ENCODE measurements at regions of chr14 and their contacts with region 1.

Region 1: DNA sequence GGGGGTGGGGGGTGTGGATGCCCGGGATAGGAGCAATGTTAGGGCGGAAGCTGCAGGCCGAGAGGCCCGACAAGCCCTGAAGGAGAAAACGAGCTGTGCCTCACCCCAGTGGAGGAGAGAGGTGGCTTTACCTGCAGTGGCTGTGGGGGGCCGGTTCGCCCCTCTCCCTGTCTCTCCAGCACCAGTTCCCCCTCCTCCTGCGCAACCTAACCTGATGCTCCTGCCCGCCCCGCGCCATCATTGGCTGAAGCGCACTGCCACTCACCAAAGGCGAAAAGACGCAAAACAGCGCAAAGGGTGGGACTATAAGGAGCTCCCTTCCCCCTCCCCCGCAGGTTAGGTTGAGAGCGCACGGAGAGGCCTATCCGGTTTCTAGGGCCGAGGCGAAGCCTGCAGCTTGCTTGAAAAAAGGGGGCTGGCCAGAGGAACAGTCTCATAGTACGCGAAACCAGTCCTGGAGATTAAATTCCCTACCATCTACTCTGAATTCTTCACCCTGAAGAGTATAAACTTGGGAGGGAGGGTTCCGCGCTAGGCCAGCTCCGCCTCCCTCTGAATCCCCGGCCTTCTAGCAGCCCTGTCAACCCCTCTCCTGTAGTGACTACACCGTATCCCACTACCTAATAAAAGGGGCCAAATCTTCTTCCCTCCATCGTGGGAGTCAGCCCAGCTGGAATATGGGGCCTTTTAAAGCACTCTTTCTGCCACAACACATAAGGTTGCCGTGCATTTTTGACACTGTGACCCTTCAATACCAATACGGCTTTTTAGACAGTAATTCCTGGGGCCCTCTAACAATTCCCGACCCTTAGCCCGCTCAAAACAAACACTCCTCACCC is 18.6 kb downstream of the CHD8 start:
- DNase-seq: peak; percentile 97
- H3K4me3 Mint-ChIP-seq: peak overlapping the region; percentile 93
- H3K27ac Mint-ChIP-seq: peak overlapping the region; percentile 73
- H3K4me1 Mint-ChIP-seq: peaks cover 67% of the 10 kb centered on the region
- H3K27me3 Mint-ChIP-seq: no peaks in the 10 kb centered on the region

Region 2: GRCh38 chr14:21262987-21263655 is 174.2 kb before region 1 on chr14:
- intact Hi-C with region 1: no loop called
- DNase-seq: no peak
- H3K4me3 Mint-ChIP-seq: peak overlapping the region; percentile 99
- H3K27ac Mint-ChIP-seq: peak overlapping the region; percentile 91
- H3K4me1 Mint-ChIP-seq: peaks cover 77% of the 10 kb centered on the region
- H3K27me3 Mint-ChIP-seq: no peaks in the 10 kb centered on the region

Region 3: DNA sequence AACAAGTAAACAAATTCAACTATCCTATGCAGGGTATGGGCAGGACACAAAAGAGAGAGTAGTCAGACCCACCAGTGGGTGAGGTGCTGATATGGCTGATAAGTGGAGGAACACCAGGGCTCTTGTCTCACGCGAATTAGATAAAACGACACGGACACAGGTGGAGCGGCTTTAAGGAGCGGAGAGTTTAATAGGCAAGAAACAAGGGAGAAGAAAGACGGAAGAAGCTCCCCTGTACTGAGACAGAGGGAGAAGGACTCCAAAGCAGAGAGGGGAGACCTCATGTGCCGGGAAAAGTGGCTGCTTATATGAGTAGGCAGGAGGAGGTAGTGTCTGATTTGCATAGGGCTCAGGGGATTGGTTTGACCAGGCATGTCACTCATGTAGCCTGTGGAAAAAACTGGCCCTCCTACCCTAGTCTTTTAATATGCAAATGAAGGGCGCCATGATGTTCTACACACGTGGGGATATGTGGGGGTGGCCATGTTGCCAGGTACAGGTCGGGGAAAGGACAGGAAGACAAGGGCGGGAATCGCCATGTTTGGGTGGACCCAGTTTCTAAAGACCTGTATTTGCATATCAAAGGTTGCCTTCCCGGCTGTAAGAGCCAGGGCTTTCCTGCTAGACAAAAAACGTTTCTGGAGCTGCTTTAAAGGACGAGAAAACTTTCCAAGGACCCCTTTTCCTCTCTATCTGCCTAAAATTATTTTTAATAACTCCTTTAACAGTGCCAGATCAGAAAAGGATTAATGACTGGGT is 128.6 kb before region 1 on chr14:
- intact Hi-C with region 1: loop called (anchors 5 kb)
- DNase-seq: peak; percentile 65
- H3K4me3 Mint-ChIP-seq: peak overlapping the region; percentile 64
- H3K27ac Mint-ChIP-seq: peak overlapping the region; percentile 64
- H3K4me1 Mint-ChIP-seq: peaks cover 16% of the 10 kb centered on the region
- H3K27me3 Mint-ChIP-seq: peaks cover 3% of the 10 kb centered on the region

Region 4: GRCh38 chr14:21373980-21374379 is 63.3 kb before region 1 on chr14:
- intact Hi-C with region 1: no loop called
- DNase-seq: no peak
- H3K4me3 Mint-ChIP-seq: no peak overlapping the region
- H3K27ac Mint-ChIP-seq: no peak overlapping the region
- H3K4me1 Mint-ChIP-seq: peaks cover 16% of the 10 kb centered on the region
- H3K27me3 Mint-ChIP-seq: no peaks in the 10 kb centered on the region

Region 5: DNA sequence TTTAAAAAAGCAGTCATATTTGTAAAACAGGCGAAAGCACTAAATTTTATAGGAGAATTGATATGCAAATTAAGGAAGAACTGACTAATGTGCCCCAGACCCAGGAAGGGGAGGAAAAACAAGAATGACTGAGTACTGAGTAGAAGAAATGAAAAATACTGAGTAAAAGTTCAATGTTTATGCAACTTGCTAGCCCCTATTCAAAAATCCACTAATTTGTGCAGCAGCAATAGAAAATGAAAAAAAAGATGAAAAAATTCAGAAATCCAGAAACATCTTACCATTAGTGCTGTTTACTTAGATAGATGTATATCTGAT is 12.6 kb after region 1 on chr14:
- intact Hi-C with region 1: loop called (anchors 1 kb)
- DNase-seq: no peak
- H3K4me3 Mint-ChIP-seq: peak overlapping the region; percentile 27
- H3K27ac Mint-ChIP-seq: peak overlapping the region; percentile 84
- H3K4me1 Mint-ChIP-seq: peaks cover 51% of the 10 kb centered on the region
- H3K27me3 Mint-ChIP-seq: no peaks in the 10 kb centered on the region

Region 6: DNA sequence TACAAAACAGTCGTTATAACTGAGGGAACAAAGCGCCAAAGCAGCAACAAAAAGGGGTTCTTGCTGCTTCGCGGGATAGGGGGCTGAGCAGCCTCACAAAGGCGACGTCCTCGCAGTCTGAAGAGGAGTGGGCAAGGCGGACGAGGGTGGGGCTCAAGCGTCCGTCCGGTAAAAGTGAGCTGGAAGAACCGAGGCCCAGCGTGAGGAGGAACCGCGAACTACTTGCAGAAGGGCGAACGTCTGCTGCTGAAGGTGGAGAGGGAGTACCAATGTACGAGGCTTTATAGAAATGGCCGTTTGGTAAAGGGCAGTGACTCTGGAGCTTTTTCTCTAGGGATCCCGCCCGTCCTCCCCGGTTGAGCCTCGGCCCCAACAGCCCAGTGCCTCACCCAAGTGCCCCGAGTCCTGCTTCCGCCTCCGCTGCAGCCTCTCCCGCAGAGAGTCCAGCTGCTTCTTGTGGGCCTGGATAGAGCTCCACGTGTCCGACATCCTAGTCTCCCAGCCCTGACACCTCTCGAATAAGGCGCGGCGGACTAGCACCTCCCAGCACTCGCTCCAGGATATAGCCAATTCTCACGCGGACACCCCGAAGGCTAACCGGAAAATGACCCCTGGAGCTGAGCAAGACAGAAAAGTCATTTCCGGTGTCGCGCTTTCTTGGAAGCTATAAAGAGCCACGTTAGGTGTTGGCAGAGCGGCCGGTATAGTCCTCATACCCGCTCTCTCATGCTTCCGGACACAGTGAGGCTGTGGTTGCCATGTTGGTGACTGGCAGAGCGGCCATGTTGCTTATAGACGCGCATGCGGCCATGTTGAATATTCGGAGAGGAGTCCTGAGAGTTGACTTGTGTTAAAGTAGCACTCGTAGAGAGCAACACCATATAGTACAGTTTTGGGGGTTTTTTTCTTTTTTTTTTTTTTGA is 73.7 kb after region 1 on chr14 and contains the start of gene METTL3:
- intact Hi-C with region 1: loop called (anchors 1 kb)
- DNase-seq: peak; percentile 93
- H3K4me3 Mint-ChIP-seq: peak within 1 kb of the TSS; percentile 99
- H3K27ac Mint-ChIP-seq: peak within 1 kb of the TSS; percentile 93
- H3K4me1 Mint-ChIP-seq: peaks cover 27% of the 10 kb centered on the region
- H3K27me3 Mint-ChIP-seq: peaks cover 12% of the 10 kb centered on the region
- total RNA-seq, gene METTL3: 75.1 and 77.7 TPM in 2 replicates

Measured in activated T-helper 1 cell treated with anti-CD3 and anti-CD28 coated beads, Interleukin-12 subunit alpha, Interleukin-12 subunit beta, Interleukin-2, Interleukin-4 antibody, amounts not matched to agents 30 ng/mL and 10 ng/mL and 1 ng/mL, durations not matched to agents 14 hours and 24 hours and 36 hours (primary cell).